Ovary (tissue), 10 donors: ENCODE measurements at regions of chr1 and their contacts with region 1.

Region 1: GRCh38 chr1:56660293-56660692 is 15.2 kb downstream of the PRKAA2 start:
- DNase-seq: no peak
- H3K4me3 ChIP-seq: no peak overlapping the region
- H3K27ac ChIP-seq: no peak overlapping the region
- H3K4me1 ChIP-seq: peaks cover 1% of the 10 kb centered on the region
- H3K27me3 ChIP-seq: no peaks in the 10 kb centered on the region
- CTCF ChIP-seq: no peak
- EP300 ChIP-seq: no peak
- POLR2A ChIP-seq: no peak

Region 2: GRCh38 chr1:57901208-57901919 is 1241.1 kb after region 1 on chr1:
- intact Hi-C with region 1: loop called in 1 of 4 experiments (anchors 5 kb)
- DNase-seq: no peak
- H3K4me3 ChIP-seq: no peak overlapping the region
- H3K27ac ChIP-seq: no peak overlapping the region
- H3K4me1 ChIP-seq: no peaks in the 10 kb centered on the region
- H3K27me3 ChIP-seq: no peaks in the 10 kb centered on the region
- CTCF ChIP-seq: no peak
- EP300 ChIP-seq: no peak
- POLR2A ChIP-seq: no peak